ENCODE measurements at regions of chr22 and their contacts with region 1.

Region 1: GRCh38 chr22:30763815-30764686 is 69.4 kb downstream of the OSBP2 start:
- H3K4me3 ChIP-seq: no peak overlapping the region
- H3K27ac ChIP-seq: no peak overlapping the region
- H3K4me1 ChIP-seq: no peaks in the 10 kb centered on the region
- CTCF ChIP-seq: no peak

Region 2: DNA sequence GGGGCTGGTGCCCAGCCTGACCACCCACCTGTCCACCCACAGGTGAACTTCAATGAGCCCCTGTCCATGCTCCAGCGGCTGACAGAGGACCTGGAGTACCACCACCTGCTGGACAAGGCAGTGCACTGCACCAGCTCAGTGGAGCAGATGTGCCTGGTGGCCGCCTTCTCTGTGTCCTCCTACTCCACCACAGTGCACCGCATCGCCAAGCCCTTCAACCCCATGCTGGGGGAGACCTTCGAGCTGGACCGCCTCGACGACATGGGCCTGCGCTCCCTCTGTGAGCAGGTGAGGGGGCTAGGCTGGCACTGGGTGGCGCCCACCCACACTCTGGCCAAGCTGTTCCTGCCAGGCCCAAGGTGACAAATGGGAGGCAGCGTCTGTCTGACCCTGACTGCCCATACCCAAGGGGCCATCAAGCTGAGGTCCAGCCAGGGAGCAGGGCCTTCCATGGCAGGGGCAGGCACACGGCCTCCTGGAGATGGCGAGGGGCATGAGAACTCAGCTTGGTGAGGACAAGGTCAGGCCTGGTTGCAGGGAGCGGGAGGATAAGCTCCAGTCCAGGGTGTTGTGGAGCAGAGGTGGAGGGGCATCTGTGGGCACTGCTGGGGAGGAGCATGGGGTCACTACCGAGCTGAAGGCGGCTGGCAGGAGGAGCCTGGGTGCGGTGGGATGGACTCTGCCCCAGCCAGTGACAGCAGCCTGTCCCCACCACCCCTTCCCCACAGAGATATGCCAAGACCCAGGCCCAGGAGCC is 126.8 kb after region 1 on chr22:
- CTCF ChIA-PET with region 1: interaction called, 48 read pairs
- POLR2A ChIA-PET with region 1: no interaction called
- H3K4me3 ChIP-seq: no peak overlapping the region
- H3K27ac ChIP-seq: no peak overlapping the region
- H3K4me1 ChIP-seq: no peaks in the 10 kb centered on the region
- CTCF ChIP-seq: peak; percentile 81

Region 3: DNA sequence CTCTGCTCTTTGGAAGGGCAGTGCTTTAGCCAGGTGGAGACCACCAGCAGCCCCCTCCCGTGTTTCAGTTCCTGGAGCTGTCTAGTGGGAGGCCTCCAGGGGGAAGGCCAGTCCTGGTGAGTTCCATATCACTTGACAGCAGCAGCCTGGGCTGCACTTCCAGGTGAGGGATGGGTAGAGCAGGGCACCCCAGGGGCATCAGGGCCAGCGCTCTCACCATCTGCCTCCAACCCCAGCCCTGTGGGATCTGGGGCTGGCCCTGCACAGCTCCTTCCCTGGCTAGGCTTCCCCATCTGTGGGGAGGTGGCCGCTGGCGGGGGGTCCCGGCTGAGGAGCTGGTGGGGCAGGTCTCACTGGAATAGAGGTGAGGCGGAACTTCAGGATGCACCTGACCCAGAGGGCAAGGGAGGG is 144.0 kb after region 1 on chr22:
- CTCF ChIA-PET with region 1: interaction called, 24 read pairs
- POLR2A ChIA-PET with region 1: no interaction called
- H3K4me3 ChIP-seq: no peak overlapping the region
- H3K27ac ChIP-seq: no peak overlapping the region
- H3K4me1 ChIP-seq: no peaks in the 10 kb centered on the region
- CTCF ChIP-seq: no peak